Left ventricle myocardium inferior (tissue), 1 donor: ENCODE measurements at regions of chr11 and their contacts with region 1.

Region 1: DNA sequence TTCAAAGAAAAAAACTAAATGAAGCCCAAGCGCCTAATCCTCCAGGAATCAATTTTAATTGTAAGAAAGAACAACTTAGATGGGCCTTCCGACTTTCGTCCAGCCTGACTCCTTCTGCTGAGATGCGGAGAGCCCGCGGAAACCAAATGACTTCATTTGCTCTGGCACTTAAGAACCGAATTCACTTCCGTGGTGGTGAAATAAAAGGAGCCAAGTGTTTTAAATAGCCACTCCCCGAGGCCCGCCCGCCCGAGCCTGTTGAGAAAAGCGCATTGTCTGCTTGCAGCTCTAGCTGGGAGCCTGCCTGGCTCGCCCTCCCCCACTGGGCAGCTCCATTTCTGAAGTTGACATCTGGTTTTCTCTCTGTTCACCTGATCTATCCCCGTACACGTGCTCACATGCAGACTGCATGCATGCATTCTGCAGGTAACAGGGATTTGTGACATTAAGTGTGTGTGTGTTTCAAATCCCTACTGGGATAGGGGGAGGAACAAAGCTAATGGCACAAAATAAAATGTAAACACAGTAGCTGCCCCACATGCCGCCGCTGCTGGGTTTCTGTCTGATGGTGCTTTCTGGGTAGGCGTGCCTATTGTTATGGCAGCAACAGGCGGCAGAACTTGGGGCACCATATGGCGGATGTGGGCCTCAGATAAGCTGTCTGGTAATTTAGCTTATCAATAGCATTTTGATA is 6.2 kb downstream of the TEAD1 start:
- DNase-seq: peak; percentile 87
- H3K4me3 ChIP-seq: peak overlapping the region; percentile 38
- H3K27ac ChIP-seq: peak overlapping the region; percentile 51
- H3K4me1 ChIP-seq: peaks cover 98% of the 10 kb centered on the region
- H3K27me3 ChIP-seq: no peaks in the 10 kb centered on the region
- CTCF ChIP-seq: no peak

Region 2: GRCh38 chr11:12755510-12756453 is 75.4 kb after region 1 on chr11:
- intact Hi-C with region 1: no loop called
- DNase-seq: no peak
- H3K4me3 ChIP-seq: no peak overlapping the region
- H3K27ac ChIP-seq: no peak overlapping the region
- H3K4me1 ChIP-seq: peaks cover 63% of the 10 kb centered on the region
- H3K27me3 ChIP-seq: no peaks in the 10 kb centered on the region
- CTCF ChIP-seq: no peak

Region 3: DNA sequence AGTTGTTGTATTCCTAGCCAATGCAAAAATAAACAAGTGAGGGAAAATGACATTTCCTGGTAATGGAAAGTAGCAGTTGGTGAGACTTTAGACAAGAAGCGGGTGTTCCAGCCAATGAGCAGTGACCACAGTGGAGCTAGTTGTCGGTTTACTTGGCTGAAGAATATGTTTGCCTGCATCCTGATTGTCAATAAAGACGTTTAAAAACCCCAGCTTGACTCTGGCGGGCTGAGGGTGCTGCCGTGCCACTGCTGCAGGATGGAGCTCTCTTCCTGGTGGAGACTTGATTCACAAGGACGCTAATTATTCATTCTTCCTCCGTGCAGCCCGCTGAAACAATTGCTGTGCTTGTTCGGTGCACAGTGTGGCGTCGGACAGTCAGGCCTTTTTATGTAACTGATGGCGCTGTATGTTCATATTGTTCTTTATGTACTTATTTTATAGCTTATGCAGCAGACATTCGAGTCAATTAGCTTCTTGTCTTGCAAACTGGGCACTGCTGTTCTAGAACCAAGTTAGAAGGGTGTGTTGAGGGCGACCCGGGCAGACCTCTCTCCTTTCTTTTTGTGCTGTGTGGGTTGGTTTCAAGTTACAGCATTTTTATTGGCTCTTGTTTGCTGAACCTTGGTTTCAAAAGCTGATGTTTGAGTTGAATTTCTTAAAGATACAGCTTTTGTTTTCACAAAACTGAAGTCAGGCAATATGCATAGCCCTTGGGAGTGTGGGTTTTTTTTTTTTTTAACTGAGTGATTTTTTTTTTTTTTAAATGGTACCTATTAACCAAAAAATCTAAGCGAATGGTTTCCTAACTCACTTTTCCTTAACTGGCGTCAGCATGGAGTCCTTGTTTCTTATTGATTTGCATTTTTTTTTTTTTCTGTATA is 147.8 kb after region 1 on chr11:
- intact Hi-C with region 1: loop called (anchors 10 kb)
- DNase-seq: no peak
- H3K4me3 ChIP-seq: peak overlapping the region; percentile 60
- H3K27ac ChIP-seq: peak overlapping the region; percentile 81
- H3K4me1 ChIP-seq: peaks cover 66% of the 10 kb centered on the region
- H3K27me3 ChIP-seq: no peaks in the 10 kb centered on the region
- CTCF ChIP-seq: no peak